Heart right ventricle (tissue), 16 donors: ENCODE measurements at regions of chr5 and their contacts with region 1.

Region 1: DNA sequence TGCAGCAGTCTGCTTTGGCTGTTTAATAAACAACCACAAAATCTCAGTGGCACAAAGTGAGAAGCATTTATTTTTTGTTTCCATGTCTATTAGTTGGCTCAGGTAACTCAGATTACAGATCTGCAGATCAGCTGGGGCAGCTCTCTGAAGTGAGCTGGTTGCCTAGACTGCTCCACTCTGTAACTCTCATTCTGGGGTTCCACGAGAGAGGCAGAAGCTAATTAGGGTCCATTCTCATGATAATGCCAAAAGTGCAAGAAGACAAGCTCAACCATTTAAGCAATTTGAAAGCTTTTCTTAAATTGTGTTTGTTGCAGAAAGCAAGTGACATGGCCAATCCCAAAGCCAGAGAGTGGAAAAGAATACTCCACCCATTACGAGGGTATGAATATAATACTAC is 13.2 kb downstream of the MEIKIN start:
- DNase-seq: no peak
- ATAC-seq: no peak
- H3K4me3 ChIP-seq: no peak overlapping the region
- H3K27ac ChIP-seq: no peak overlapping the region
- H3K4me1 ChIP-seq: no peaks in the 10 kb centered on the region
- H3K27me3 ChIP-seq: peaks cover 0 to 4% (median 0%) of the 10 kb centered on the region in 7 donors
- CTCF ChIP-seq: no peak

Region 2: DNA sequence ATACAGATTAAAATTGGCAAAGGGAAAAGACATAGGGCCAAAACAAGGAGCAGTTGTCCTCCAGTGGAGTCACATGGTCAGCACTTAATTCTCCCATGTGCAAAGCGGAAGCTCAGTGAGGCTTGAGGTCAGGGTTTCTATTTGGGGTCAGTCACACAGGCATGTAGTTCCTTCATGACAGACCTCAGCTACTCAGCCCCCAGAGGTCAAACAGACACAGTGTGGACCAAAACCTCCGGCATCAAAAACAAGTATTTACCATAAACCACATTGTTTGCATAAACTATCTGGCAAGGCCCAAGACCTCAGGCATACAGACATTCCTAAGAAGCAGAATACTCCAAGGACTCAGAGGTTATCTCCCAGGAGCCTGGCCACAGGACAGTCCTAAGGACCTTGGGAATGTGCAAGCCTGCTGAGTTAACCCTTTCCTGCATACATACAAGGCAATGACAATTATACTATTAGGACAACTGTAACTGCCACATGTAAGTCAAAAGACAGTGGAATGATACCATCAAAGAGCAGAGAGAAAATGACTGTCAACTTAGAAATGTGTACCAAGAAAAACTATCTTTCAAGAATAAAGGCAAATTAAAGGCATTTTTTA is 106.7 kb before region 1 on chr5:
- intact Hi-C with region 1: loop called in 1 of 10 experiments (anchors 10 kb)
- DNase-seq: no peak
- ATAC-seq: no peak
- H3K4me3 ChIP-seq: no peak overlapping the region
- H3K27ac ChIP-seq: no peak overlapping the region
- H3K4me1 ChIP-seq: no peaks in the 10 kb centered on the region
- H3K27me3 ChIP-seq: no peaks in the 10 kb centered on the region
- CTCF ChIP-seq: no peak